ENCODE measurements at regions of chr1 and their contacts with region 1.

Region 1: GRCh38 chr1:21607549-21608529 is 61.3 kb downstream of the RAP1GAP start:
- DNase-seq: no peak
- H3K4me3 ChIP-seq: no peak overlapping the region
- CTCF ChIP-seq: no peak

Region 2: GRCh38 chr1:21594935-21595897 is 12.6 kb before region 1 on chr1:
- CTCF ChIA-PET with region 1: interaction called, 12 read pairs
- POLR2A ChIA-PET with region 1: no interaction called
- DNase-seq: no peak
- H3K4me3 ChIP-seq: no peak overlapping the region
- CTCF ChIP-seq: peak; percentile 72